Common myeloid progenitor, CD34-positive (primary cell): ENCODE measurements at regions of chr12 and their contacts with region 1.

Region 1: DNA sequence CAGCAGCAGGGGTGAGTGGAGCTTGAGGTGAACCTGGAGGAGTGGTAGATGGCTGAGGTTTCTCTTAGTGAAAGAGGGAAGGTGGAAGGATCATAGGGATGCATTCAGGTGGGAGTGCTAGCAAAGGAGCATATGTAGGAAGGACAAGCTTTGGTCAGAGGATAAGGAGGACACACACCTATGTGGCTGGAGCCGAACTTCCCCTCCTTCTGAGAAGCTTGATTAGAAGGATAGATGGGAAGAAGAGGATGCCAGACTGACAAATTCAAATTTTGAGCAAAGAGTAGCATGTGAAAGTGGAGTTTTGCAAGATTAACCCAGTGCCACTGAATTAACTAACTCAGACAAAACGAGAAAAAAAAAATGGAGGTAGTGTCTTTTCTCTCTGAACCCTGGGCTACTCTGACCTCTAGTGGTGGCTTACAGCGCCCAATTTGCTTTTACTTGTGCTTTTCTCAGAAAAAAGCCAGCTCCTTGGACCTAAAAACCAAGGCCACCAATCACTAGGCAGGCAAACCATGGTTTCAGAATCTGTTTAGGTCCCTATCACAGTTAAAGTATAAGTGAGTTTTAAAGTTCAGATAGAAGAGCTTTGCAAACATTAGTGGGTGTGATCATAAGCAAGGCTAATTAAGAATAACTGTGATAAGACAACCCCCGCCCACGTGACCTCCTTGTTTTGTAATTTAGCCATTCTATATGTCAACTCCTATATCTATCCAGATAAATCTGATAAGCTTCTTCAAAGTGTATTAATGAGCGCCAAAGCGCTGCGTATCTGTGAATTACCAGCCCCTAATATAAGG is 15.5 kb downstream of the EMP1 start:
- DNase-seq: peak; percentile 74 to 91 (median 84)
- H3K4me3 ChIP-seq: no peak overlapping the region
- H3K27ac ChIP-seq: no peak overlapping the region
- H3K4me1 ChIP-seq: peaks cover 0 to 47% (median 39%) of the 10 kb centered on the region in 4 experiments
- H3K27me3 ChIP-seq: no peaks in the 10 kb centered on the region

Region 2: DNA sequence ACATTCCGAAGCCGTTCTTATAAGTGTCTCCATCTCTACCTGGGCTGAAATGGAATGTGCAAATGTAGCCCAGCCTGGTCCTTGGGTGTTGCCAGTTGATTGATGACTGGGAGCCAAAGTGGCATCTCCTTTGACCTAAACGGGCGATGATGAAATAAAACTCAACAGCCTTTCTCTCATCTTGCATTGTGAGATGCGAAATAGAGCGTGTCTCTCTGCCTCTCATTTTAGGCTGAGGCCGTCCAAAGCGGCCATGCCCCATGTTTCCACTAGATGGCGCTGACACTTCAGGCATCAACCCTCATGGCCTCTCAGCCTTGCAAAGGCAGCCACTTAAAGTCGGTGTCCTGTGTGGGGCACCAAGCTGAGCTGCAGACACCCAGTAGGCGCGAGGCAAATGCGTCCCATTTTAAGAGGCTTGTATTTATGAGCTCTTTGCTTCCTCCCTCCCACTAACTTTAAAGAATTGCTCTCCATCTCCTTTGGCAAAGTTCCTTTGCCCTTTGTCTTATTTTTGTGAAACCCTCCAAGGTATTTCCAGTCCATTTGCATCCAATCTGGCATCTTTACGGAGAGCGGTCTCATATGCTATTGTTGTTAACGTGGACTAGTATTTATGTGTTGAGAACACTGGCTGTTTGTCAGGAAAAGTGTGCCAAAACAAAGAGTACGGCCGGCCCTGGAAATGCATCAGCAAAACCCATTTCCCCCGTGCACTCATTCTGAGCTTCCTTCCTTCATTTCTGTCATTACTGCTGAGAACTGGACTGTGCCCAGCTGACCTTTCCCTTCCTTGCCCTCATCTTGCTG is 295.7 kb before region 1 on chr12:
- CTCF ChIA-PET with region 1: interaction called, 174 read pairs
- POLR2A ChIA-PET with region 1: no interaction called
- DNase-seq: peak; percentile 79 to 89 (median 87)
- H3K4me3 ChIP-seq: peak overlapping the region in 5 of 7 experiments; percentile 19 to 55 (median 46)
- H3K27ac ChIP-seq: no peak overlapping the region
- H3K4me1 ChIP-seq: peaks cover 0 to 26% (median 22%) of the 10 kb centered on the region in 4 experiments
- H3K27me3 ChIP-seq: no peaks in the 10 kb centered on the region

Region 3: GRCh38 chr12:12999959-13000615 is 212.0 kb before region 1 on chr12 and contains the start of gene HEBP1:
- CTCF ChIA-PET with region 1: interaction called, 123 read pairs
- POLR2A ChIA-PET with region 1: interaction called, 3 read pairs
- DNase-seq: peak; percentile 87 to 92 (median 91)
- H3K4me3 ChIP-seq: peak within 1 kb of the TSS; percentile 43 to 90 (median 83)
- H3K27ac ChIP-seq: peak within 1 kb of the TSS; percentile 43 to 71
- H3K4me1 ChIP-seq: peaks cover 7 to 51% (median 33%) of the 10 kb centered on the region in 4 experiments
- H3K27me3 ChIP-seq: no peaks in the 10 kb centered on the region

Region 4: DNA sequence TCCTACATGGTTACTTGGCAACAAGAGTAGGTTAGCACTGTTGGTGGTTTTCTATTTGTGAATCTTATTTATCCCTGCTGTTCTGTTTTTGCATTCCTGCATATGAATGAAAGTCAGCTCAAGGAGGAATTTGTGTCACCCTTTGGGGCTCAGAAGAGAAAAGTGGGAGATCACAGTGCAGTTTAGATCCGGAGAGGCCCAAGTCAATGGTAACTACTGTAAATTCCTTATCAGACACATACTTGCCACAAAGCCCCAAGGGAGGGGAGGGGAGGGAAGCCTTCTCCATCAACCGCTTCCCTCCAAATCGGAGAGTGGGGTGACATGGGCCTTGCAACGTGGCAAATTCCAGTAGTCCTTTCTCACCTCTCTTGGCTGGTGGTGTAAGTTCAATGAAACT is 123.6 kb before region 1 on chr12:
- CTCF ChIA-PET with region 1: interaction called, 22 read pairs
- POLR2A ChIA-PET with region 1: no interaction called
- DNase-seq: no peak
- H3K4me3 ChIP-seq: no peak overlapping the region
- H3K27ac ChIP-seq: no peak overlapping the region
- H3K4me1 ChIP-seq: peaks cover 0 to 3% (median 0%) of the 10 kb centered on the region in 4 experiments
- H3K27me3 ChIP-seq: no peaks in the 10 kb centered on the region

Region 5: DNA sequence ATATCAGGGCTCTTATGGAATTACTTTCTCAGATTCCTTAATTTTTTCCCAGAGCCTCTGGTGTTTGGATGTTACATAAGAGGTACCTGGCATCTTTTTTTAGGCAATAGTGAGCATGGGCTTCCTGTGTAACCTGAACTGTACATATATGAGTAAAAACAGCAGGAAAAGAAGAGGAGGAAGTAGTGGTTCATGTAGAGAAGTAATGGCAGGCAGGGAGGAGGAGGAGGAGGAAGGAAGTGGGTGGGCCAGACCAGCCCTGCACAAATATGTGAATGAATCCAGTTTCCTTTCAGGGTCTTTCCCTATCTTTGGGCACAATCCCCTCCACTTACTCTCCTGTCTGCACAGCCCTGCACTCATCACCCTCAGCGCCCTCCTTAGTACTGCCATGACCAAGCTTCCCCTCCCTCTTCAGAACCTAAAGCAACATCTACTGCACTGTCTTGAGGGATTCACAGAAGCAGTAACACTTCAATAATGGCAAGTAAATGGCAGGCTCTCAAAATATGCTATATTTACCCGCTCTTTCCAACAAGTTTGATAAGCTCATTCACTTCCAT is 67.7 kb before region 1 on chr12:
- CTCF ChIA-PET with region 1: no interaction called
- POLR2A ChIA-PET with region 1: no interaction called
- DNase-seq: peak in 2 of 3 donors; percentile 30 to 42
- H3K4me3 ChIP-seq: peak overlapping the region in 1 of 7 experiments; percentile 17
- H3K27ac ChIP-seq: no peak overlapping the region
- H3K4me1 ChIP-seq: peaks cover 8 to 45% (median 40%) of the 10 kb centered on the region in 4 experiments
- H3K27me3 ChIP-seq: no peaks in the 10 kb centered on the region

Region 6: GRCh38 chr12:13179211-13180074 is 32.6 kb before region 1 on chr12:
- CTCF ChIA-PET with region 1: interaction called, 13 read pairs
- POLR2A ChIA-PET with region 1: no interaction called
- DNase-seq: peak; percentile 85 to 96 (median 95)
- H3K4me3 ChIP-seq: peak overlapping the region in 6 of 7 experiments; percentile 2 to 70 (median 52)
- H3K27ac ChIP-seq: peak overlapping the region in 1 of 2 experiments; percentile 50
- H3K4me1 ChIP-seq: peaks cover 6 to 76% (median 54%) of the 10 kb centered on the region in 4 experiments
- H3K27me3 ChIP-seq: no peaks in the 10 kb centered on the region